Activated naive CD4-positive, alpha-beta T cell treated with anti-CD3 and anti-CD28 coated beads for 36 hours (primary cell): ENCODE measurements at regions of chr6 and their contacts with region 1.

Region 1: DNA sequence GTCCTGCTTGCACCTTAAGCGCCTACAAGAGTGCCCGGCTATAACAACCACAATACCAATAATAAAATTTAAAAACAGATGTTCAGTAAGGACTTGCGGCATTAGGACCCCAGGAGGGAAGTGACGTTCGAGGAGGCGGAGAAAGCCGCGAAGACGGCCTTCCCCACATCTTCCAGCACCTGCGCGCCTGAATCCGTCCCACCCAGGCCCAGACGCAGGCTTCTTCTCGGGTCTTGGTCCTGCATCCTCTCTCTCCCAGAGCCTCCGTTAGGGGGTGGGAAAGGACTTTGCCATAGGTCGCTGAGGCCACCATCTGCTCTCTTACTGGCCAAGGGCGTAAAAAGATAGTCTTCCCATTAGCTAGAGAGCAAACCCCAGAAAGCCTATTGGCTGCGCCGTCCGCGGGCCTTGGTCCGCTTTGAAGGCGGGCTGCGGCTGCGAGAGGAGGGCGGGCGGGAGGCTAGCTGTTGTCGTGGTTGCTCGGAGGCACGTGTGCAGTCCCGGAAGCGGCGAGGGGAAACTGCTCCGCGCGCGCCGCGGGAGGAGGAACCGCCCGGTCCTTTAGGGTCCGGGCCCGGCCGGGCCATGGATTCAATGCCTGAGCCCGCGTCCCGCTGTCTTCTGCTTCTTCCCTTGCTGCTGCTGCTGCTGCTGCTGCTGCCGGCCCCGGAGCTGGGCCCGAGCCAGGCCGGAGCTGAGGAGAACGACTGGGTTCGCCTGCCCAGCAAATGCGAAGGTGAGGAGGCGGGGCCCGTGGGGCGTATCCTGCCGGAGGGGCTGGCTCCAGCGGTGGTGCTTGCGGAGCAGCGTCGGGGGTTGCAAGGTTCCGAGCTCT is at the start of gene CNPY3:
- DNase-seq: peak; percentile 98
- H3K4me3 Mint-ChIP-seq: peak within 1 kb of the TSS; percentile 100
- H3K27ac Mint-ChIP-seq: peak within 1 kb of the TSS; percentile 100
- H3K4me1 Mint-ChIP-seq: peaks cover 40% of the 10 kb centered on the region
- H3K27me3 Mint-ChIP-seq: no peaks in the 10 kb centered on the region
- total RNA-seq, gene CNPY3: 37.6 to 41.0 TPM

Region 2: DNA sequence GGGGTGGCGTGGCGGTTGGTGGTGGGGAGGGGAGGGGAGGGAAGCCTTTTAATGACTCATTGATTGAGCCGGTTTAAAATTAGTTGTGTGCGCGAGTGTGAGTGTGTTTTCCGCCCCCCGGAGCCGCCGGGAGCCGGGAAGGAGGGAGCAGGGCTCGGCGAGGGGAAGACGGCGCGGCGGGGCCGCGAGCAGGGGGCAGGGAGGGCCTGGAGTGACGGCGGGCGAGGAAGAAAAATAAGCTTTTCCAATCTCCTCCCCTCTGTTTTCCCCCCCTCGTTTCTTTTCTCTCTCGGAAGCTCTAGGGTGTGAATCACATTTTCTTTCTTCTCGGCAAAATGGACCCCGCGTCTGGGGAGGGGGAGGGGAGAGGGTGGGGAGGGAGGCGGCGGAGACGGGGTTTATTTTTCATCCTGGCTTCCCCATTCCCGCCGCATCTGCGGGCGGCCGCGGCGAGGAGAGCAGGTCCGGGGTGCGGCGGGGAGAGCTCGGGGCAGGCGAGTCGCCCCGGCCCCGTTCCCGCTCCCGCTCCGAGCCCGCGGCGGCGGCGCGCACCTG is 146.5 kb before region 1 on chr6:
- CTCF ChIA-PET with region 1: no interaction called
- intact Hi-C with region 1: loop called (anchors 5 kb)
- DNase-seq: peak; percentile 75
- H3K4me3 Mint-ChIP-seq: peak overlapping the region; percentile 81
- H3K27ac Mint-ChIP-seq: peak overlapping the region; percentile 100
- H3K4me1 Mint-ChIP-seq: peaks cover 26% of the 10 kb centered on the region
- H3K27me3 Mint-ChIP-seq: no peaks in the 10 kb centered on the region

Region 3: GRCh38 chr6:42978839-42979522 is 49.8 kb after region 1 on chr6 and contains the start of gene PEX6:
- CTCF ChIA-PET with region 1: interaction called, 6 read pairs
- intact Hi-C with region 1: loop called (anchors 1 kb)
- DNase-seq: peak; percentile 97
- H3K4me3 Mint-ChIP-seq: peak within 1 kb of the TSS; percentile 95
- H3K27ac Mint-ChIP-seq: peak within 1 kb of the TSS; percentile 99
- H3K4me1 Mint-ChIP-seq: peaks cover 53% of the 10 kb centered on the region
- H3K27me3 Mint-ChIP-seq: no peaks in the 10 kb centered on the region
- total RNA-seq, gene PEX6: 17.1 to 18.2 TPM

Region 4: GRCh38 chr6:43013843-43014433 is 84.7 kb after region 1 on chr6 and contains the starts of genes KLHDC3 and MEA1:
- CTCF ChIA-PET with region 1: interaction called, 4 read pairs
- intact Hi-C with region 1: loop called (anchors 1 kb)
- DNase-seq: peak; percentile 100
- H3K4me3 Mint-ChIP-seq: peak within 1 kb of the TSS; percentile 95
- H3K27ac Mint-ChIP-seq: peak within 1 kb of the TSS; percentile 88
- H3K4me1 Mint-ChIP-seq: peaks cover 53% of the 10 kb centered on the region
- H3K27me3 Mint-ChIP-seq: no peaks in the 10 kb centered on the region
- total RNA-seq, gene KLHDC3: 58.6 to 58.9 TPM
- total RNA-seq, gene MEA1: 80.6 to 85.1 TPM

Region 5: GRCh38 chr6:43059168-43060033 is 130.2 kb after region 1 on chr6 and contains the starts of genes KLC4 and MRPL2:
- CTCF ChIA-PET with region 1: interaction called, 5 read pairs
- intact Hi-C with region 1: loop called (anchors 1 kb)
- DNase-seq: peak; percentile 99
- H3K4me3 Mint-ChIP-seq: peak within 1 kb of the TSS; percentile 86
- H3K27ac Mint-ChIP-seq: peak within 1 kb of the TSS; percentile 93
- H3K4me1 Mint-ChIP-seq: peaks cover 29% of the 10 kb centered on the region
- H3K27me3 Mint-ChIP-seq: no peaks in the 10 kb centered on the region
- total RNA-seq, gene KLC4: 12.0 to 12.3 TPM
- total RNA-seq, gene MRPL2: 87.7 to 95.1 TPM

Region 6: GRCh38 chr6:43427406-43428111 is 498.4 kb after region 1 on chr6 and contains the start of gene ABCC10:
- CTCF ChIA-PET with region 1: no interaction called
- intact Hi-C with region 1: loop called (anchors 2 kb)
- DNase-seq: peak; percentile 97
- H3K4me3 Mint-ChIP-seq: peak within 1 kb of the TSS; percentile 87
- H3K27ac Mint-ChIP-seq: peak within 1 kb of the TSS; percentile 86
- H3K4me1 Mint-ChIP-seq: peaks cover 21% of the 10 kb centered on the region
- H3K27me3 Mint-ChIP-seq: no peaks in the 10 kb centered on the region
- total RNA-seq, gene ABCC10: 22.7 to 26.6 TPM

Region 7: DNA sequence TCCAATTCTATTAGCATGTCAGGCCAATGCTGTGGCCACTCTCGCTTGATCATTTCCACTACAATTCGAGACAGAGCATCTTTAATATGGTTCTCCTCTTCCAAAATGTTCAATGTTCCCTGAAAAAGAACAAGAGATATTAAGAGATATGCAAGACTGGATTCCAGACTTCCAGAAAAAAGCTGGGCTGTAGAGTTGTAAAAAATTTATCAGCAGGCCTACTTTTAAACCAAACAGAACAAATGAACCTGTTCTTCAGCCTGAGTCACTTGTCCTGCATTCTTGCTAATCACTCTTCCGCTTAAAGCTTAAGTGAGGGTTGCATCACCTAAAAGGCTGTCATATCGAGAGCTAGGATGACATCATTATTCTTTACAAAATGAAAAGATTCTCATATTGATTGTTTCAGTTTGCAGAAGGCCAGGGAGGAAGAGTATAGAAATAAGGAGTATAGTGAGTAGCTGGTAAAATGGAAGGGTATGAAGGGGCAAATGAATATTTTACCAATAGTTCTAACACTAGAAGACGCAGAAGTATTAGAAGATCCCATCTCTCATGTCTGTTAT is 641.8 kb after region 1 on chr6:
- CTCF ChIA-PET with region 1: no interaction called
- intact Hi-C with region 1: loop called (anchors 2 kb)
- DNase-seq: peak; percentile 34
- H3K4me3 Mint-ChIP-seq: no peak overlapping the region
- H3K27ac Mint-ChIP-seq: peak overlapping the region; percentile 89
- H3K4me1 Mint-ChIP-seq: peaks cover 36% of the 10 kb centered on the region
- H3K27me3 Mint-ChIP-seq: no peaks in the 10 kb centered on the region